Activated naive CD4-positive, alpha-beta T cell treated with anti-CD3 and anti-CD28 coated beads for 36 hours (primary cell): ENCODE measurements at regions of chr3 and their contacts with region 1.

Region 1: DNA sequence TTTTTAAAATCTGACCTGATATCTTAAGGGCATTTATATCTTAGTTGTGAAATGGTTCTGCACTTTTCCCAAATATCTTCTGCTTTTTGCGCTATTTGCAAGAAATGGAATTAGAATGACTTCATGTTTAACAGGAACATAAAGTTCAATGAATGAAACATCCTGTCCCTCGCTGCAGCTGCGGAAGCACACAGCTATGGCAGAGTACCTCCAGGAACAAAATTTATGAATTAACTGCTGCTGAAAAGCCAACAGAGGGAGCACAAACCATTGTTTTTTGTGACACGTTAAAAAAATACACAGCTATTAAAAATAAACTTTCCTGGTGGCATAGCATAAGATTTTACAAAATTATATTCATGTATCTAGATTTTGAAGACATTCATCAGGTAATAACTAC is 404.4 kb upstream of the MDFIC2 start:
- DNase-seq: peak; percentile 24
- H3K4me3 Mint-ChIP-seq: no peak overlapping the region
- H3K27ac Mint-ChIP-seq: no peak overlapping the region
- H3K4me1 Mint-ChIP-seq: peaks cover 2% of the 10 kb centered on the region
- H3K27me3 Mint-ChIP-seq: peaks cover 4% of the 10 kb centered on the region

Region 2: GRCh38 chr3:70550723-70551319 is 166.0 kb before region 1 on chr3:
- CTCF ChIA-PET with region 1: interaction called, 7 read pairs
- intact Hi-C with region 1: loop called (anchors 5 kb)
- DNase-seq: peak; percentile 88
- H3K4me3 Mint-ChIP-seq: no peak overlapping the region
- H3K27ac Mint-ChIP-seq: no peak overlapping the region
- H3K4me1 Mint-ChIP-seq: no peaks in the 10 kb centered on the region
- H3K27me3 Mint-ChIP-seq: no peaks in the 10 kb centered on the region

Region 3: GRCh38 chr3:70951316-70951715 is 234.5 kb after region 1 on chr3:
- CTCF ChIA-PET with region 1: interaction called, 3 read pairs
- intact Hi-C with region 1: loop called (anchors 10 kb)
- DNase-seq: no peak
- H3K4me3 Mint-ChIP-seq: no peak overlapping the region
- H3K27ac Mint-ChIP-seq: no peak overlapping the region
- H3K4me1 Mint-ChIP-seq: no peaks in the 10 kb centered on the region
- H3K27me3 Mint-ChIP-seq: peaks cover 2% of the 10 kb centered on the region

Region 4: DNA sequence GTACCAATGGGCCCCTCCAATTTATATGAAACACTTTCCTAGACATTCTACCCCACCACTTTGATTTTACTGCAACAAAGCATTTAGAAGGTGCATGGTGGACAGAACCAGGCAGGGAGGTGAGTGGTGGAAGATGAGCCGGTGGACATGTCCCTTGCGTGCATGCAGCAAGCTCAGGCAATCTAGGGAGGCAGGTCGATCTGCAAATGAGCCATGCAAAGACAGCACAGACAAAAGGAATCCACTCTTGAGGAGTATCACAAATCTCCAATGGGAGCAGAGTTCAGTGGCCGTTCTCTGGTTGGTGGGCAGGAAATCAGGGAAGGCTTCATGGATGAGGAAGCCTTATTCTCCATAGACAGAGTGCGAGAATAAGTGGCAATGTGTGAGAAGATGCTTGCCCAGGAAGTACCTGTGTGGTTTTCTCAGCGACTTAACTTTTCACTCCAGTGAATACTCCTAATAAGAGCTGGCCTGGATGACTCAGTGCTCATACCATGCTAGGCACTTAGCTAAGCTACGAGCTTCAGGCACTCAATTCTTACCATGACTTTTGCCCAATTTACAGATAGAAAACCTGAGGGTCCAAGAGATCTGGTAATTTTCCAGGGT is 714.2 kb after region 1 on chr3:
- CTCF ChIA-PET with region 1: no interaction called
- intact Hi-C with region 1: loop called (anchors 1 kb)
- DNase-seq: peak; percentile 53
- H3K4me3 Mint-ChIP-seq: no peak overlapping the region
- H3K27ac Mint-ChIP-seq: peak overlapping the region; percentile 86
- H3K4me1 Mint-ChIP-seq: peaks cover 83% of the 10 kb centered on the region
- H3K27me3 Mint-ChIP-seq: no peaks in the 10 kb centered on the region